OCI-LY7 (cell line): ENCODE measurements at regions of chr18 and their contacts with region 1.

Region 1: DNA sequence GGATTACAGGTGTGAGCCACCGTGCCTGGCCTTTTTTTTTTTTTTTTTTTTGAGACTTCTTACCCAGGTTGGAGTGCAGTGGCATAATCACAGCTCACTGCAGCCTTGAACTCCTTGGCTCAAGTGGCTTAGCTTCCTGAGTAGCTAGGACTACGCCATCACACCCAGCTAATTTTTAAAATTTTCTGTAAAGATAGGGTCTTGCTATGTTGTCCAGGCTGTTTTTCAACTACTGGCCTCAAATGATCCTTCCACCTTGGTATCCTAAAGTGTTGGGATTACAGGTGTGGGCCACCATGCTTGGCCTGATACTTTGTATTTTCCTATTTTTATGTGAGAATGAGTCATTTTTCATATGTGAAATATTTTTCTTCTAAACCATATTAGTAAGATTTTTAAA is 13.7 kb downstream of the ELP2 start:
- DNase-seq: no peak
- H3K4me3 ChIP-seq: no peak overlapping the region
- H3K27ac ChIP-seq: no peak overlapping the region
- H3K4me1 ChIP-seq: peaks cover 7% of the 10 kb centered on the region
- CTCF ChIP-seq: no peak

Region 2: DNA sequence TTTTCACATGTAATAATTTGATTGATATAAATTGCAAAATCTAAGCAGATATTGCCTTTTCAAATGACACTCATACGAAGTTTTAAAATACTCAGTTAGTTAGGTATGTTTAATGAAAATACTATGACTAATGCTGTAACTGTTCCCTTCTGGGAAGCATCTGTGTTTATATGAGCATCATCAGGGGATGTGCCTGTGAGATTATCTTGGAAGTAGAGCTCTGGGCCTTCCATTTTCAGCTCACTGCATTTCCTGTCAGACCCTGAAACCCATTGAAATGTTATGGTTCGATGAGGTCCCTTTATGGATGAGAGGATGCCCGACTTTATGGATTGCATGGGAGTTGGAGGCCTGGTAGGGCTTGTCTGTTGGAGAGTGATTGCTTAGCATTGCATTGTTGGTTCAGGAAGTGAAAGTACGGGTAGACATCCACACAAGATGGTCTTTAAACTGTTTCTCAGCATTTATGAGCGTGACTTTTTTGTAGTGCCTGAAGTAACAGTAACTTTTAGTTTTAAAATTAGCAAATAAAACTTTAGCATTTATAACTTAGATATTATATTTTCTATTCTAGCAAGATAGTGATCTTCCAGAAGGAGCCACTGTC is 15.0 kb after region 1 on chr18:
- CTCF ChIA-PET with region 1: no interaction called
- POLR2A ChIA-PET with region 1: interaction called, 12 read pairs
- intact Hi-C with region 1: no loop called
- DNase-seq: no peak
- H3K4me3 ChIP-seq: no peak overlapping the region
- H3K27ac ChIP-seq: no peak overlapping the region
- H3K4me1 ChIP-seq: peaks cover 6% of the 10 kb centered on the region
- CTCF ChIP-seq: no peak